ENCODE measurements at regions of chr14 and their contacts with region 1.

Region 1: GRCh38 chr14:55438066-55438683 is 2.2 kb downstream of the TBPL2 start:
- DNase-seq: peak in 1 of 2 experiments; percentile 66
- H3K4me3 ChIP-seq: no peak overlapping the region
- H3K27ac ChIP-seq: no peak overlapping the region
- H3K4me1 ChIP-seq: peaks cover 20% of the 10 kb centered on the region
- H3K27me3 ChIP-seq: no peaks in the 10 kb centered on the region
- CTCF ChIP-seq: peak; percentile 76

Region 2: GRCh38 chr14:55689981-55690863 is 252.0 kb after region 1 on chr14:
- CTCF ChIA-PET with region 1: no interaction called
- POLR2A ChIA-PET with region 1: interaction called, 14 read pairs
- intact Hi-C with region 1: no loop called
- DNase-seq: peak in 1 of 2 experiments; percentile 46
- H3K4me3 ChIP-seq: no peak overlapping the region
- H3K27ac ChIP-seq: no peak overlapping the region
- H3K4me1 ChIP-seq: 0 out of 2 replicates have a peak, but pooled peaks cover 12% of the 10 kb centered on the region
- H3K27me3 ChIP-seq: no peaks in the 10 kb centered on the region
- CTCF ChIP-seq: no peak

Measured in PC-9 (cell line).